Gastrocnemius medialis (tissue), 4 donors: ENCODE measurements at regions of chr10 and their contacts with region 1.

Region 1: DNA sequence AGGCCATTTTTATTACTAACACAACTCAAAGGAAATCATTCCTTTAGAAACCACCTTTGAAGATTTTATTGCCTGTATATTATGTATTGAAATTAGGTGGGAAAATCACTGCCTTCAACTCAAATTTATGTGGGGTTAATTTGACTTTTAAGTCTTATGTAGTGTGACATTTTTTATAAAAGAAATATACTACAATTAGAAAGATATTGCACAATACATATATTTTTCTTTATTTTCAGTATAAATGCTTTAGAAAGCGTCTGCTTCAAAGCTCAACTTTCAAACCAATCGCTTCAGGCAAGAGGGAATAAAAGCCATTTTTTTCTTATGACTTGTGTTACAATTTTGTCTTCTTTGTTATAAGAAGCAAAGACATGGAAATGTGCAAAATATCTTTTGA is 337.4 kb upstream of the ZWINT start:
- DNase-seq: no peak
- ATAC-seq: no peak
- H3K4me3 ChIP-seq: no peak overlapping the region
- H3K27ac ChIP-seq: no peak overlapping the region
- H3K4me1 ChIP-seq: no peaks in the 10 kb centered on the region
- H3K27me3 ChIP-seq: no peaks in the 10 kb centered on the region
- CTCF ChIP-seq: no peak
- POLR2A ChIP-seq: no peak

Region 2: DNA sequence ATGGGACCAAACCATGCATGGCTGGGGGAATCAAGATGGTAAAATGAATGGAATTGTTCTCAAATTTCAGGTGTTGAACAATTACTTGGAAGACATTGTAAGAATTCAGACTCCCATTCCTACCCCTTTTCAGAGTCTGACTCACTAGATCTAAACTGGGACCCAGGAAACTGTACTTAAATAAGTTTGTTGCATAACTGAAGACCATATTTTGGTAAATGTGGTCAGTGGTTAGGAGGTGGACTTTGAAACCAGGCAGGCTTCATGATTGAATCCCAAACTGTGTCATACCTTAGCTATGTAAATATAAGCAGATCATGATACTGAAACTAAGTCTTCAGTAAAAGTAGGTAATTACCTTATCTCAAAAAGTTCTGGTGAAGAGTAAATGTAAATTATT is 379.1 kb before region 1 on chr10:
- in situ Hi-C with region 1: no loop called
- intact Hi-C with region 1: no loop called
- DNase-seq: no peak
- ATAC-seq: no peak
- H3K4me3 ChIP-seq: no peak overlapping the region
- H3K27ac ChIP-seq: no peak overlapping the region
- H3K4me1 ChIP-seq: no peaks in the 10 kb centered on the region
- H3K27me3 ChIP-seq: no peaks in the 10 kb centered on the region
- CTCF ChIP-seq: no peak
- POLR2A ChIP-seq: no peak

Region 3: DNA sequence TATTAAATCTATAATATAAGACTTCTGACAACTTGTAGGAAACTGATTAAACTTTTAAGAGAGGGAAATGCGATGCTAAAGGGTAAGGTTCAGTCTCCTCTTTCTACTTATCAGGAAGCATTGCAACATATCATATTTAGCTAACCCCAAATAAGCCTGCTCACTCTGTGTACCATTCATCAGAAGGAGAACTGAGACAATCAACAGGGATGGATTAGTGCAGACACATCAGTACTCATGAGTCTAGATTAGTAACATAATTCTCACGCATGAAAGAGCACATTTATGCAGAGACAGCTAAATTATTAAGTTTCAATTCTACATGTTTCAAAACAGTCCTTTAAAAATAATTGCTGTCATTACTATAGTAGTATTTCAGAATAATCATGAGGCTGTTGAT is 16.8 kb after region 1 on chr10:
- in situ Hi-C with region 1: no loop called
- intact Hi-C with region 1: loop called (anchors 1 kb)
- DNase-seq: no peak
- ATAC-seq: no peak
- H3K4me3 ChIP-seq: no peak overlapping the region
- H3K27ac ChIP-seq: no peak overlapping the region
- H3K4me1 ChIP-seq: no peaks in the 10 kb centered on the region
- H3K27me3 ChIP-seq: no peaks in the 10 kb centered on the region
- CTCF ChIP-seq: no peak
- POLR2A ChIP-seq: no peak

Region 4: DNA sequence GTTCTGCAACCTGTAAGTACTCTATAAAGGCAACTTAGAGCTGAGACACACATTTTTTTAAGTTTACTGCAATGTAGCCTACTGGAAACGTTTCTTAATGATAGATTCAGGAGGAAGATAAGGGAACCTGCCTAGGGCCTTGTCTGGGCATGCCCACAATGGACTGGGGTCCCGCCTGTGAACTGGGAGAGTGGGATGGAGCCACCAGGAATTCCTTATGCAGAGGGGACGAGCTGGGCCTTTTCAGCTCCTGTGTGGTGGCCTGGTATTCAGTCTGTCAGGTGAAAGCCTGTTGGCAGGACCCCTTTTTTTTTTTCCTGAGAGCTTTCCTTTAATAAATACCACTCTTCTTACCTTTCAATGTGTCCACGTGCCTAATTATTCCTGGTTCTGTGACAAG is 47.0 kb after region 1 on chr10:
- in situ Hi-C with region 1: no loop called
- intact Hi-C with region 1: no loop called
- DNase-seq: no peak
- ATAC-seq: no peak
- H3K4me3 ChIP-seq: no peak overlapping the region
- H3K27ac ChIP-seq: no peak overlapping the region
- H3K4me1 ChIP-seq: no peaks in the 10 kb centered on the region
- H3K27me3 ChIP-seq: no peaks in the 10 kb centered on the region
- CTCF ChIP-seq: no peak
- POLR2A ChIP-seq: no peak